CD8-positive, alpha-beta T cell (primary cell): ENCODE measurements at regions of chr1 and their contacts with region 1.

Region 1: DNA sequence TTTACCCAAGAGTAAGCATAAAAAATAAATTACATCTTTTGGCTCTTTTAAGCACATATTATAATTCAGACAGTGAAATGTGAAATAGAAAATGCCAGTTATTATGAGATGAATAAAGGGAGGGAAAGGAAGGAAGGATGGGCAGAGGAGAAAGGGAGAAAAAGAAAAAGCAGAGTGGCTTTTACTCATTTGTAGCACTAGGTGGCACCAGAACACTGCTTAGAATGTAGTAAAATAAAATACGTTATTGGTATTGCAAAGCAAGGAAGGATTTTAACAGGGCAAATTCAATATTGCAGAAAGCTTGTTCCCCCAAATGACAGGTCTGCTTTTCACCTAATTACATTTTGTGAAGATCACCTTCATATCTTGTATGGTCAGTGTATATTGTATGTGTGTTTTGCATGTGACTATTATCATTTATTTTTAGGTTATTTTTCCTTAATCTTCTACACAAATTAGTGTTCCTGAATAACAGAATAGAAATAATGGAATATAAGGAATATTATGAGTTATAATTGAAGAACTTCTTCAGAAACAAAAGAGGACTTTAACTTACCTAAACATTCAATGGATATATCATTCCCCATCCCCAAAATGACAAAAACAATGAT is 9.1 kb upstream of the PCNX2 start:
- DNase-seq: peak in 3 of 9 experiments; percentile 7 to 61 (median 53)
- ATAC-seq: peak; percentile 49
- H3K4me3 ChIP-seq: no peak overlapping the region
- H3K4me3 Mint-ChIP-seq: no peak overlapping the region
- H3K27ac ChIP-seq: no peak overlapping the region
- H3K27ac Mint-ChIP-seq: no peak overlapping the region
- H3K4me1 ChIP-seq: no peaks in the 10 kb centered on the region
- H3K4me1 Mint-ChIP-seq: no peaks in the 10 kb centered on the region
- H3K27me3 ChIP-seq: no peaks in the 10 kb centered on the region
- H3K27me3 Mint-ChIP-seq: peaks cover 11% of the 10 kb centered on the region
- CTCF ChIP-seq: peak; percentile 95

Region 2: DNA sequence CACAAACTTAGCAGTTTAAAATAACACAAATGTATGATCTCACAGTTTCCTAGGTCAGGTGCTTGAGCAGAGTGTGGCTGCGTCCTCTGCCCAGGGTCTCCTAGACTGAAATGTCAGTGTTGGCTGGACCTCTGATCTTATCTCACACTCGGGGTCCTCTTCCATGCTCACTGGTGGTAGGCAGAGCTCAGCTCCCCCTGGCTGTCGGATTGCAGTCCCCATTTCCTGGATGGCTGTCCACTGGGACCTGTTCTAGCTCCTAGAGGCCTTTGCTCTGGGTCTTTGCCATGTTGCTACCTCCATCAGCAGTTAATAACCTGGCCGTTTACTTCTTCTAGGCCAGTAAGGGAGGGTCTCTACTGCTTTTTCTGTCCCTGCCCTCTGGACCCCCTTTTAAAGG is 116.5 kb before region 1 on chr1:
- CTCF ChIA-PET with region 1: no interaction called
- POLR2A ChIA-PET with region 1: no interaction called
- intact Hi-C with region 1: no loop called
- DNase-seq: no peak
- ATAC-seq: no peak
- H3K4me3 ChIP-seq: no peak overlapping the region
- H3K4me3 Mint-ChIP-seq: no peak overlapping the region
- H3K27ac ChIP-seq: no peak overlapping the region
- H3K27ac Mint-ChIP-seq: no peak overlapping the region
- H3K4me1 ChIP-seq: no peaks in the 10 kb centered on the region
- H3K4me1 Mint-ChIP-seq: no peaks in the 10 kb centered on the region
- H3K27me3 ChIP-seq: no peaks in the 10 kb centered on the region
- H3K27me3 Mint-ChIP-seq: no peaks in the 10 kb centered on the region
- CTCF ChIP-seq: no peak

Region 3: GRCh38 chr1:233253832-233254331 is 50.7 kb before region 1 on chr1:
- CTCF ChIA-PET with region 1: no interaction called
- POLR2A ChIA-PET with region 1: no interaction called
- intact Hi-C with region 1: no loop called
- DNase-seq: no peak
- ATAC-seq: no peak
- H3K4me3 ChIP-seq: no peak overlapping the region
- H3K4me3 Mint-ChIP-seq: no peak overlapping the region
- H3K27ac ChIP-seq: no peak overlapping the region
- H3K27ac Mint-ChIP-seq: peak overlapping the region; percentile 11
- H3K4me1 ChIP-seq: no peaks in the 10 kb centered on the region
- H3K4me1 Mint-ChIP-seq: no peaks in the 10 kb centered on the region
- H3K27me3 ChIP-seq: no peaks in the 10 kb centered on the region
- H3K27me3 Mint-ChIP-seq: no peaks in the 10 kb centered on the region
- CTCF ChIP-seq: no peak

Region 4: DNA sequence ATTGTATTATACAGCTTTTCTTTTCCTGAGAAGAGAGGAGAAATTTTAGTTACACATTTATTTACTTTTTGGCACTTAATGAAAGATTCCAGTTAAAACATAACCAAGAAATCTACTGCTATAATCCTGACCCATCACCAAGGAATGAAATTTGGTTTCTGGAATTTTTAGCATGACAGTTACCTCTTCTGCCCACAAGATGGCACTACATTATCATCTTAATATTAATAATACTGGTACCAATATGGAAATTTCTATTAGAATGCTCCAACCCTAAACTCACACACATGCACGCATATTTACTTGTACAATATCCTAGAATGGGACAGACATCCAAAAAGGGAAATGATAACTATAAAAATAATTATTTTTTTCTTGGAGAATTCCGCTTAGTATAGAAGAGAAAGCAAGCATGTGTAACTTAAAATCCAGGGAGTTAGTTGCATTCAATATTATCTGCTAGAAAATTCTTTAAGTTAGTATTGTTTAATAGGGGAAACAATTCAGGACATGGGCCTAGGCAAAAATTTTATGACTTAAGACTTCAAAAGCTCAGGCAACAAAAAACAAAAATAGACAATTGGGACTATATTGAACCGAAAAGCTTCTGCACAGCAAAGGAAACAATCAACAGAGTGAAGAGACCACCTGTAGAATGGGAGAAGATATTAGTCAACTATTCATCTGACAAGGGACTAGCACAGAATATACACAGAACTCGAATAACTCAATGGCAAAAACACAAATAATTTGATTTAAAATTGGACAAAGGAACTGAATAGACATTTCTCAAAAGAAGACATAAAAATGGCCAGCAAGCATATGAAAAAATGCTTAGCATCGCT is 60.3 kb after region 1 on chr1:
- CTCF ChIA-PET with region 1: interaction called, 5 read pairs
- POLR2A ChIA-PET with region 1: no interaction called
- intact Hi-C with region 1: loop called (anchors 1 to 2 kb)
- DNase-seq: peak in 1 of 9 experiments; percentile 17
- ATAC-seq: no peak
- H3K4me3 ChIP-seq: no peak overlapping the region
- H3K4me3 Mint-ChIP-seq: no peak overlapping the region
- H3K27ac ChIP-seq: no peak overlapping the region
- H3K27ac Mint-ChIP-seq: no peak overlapping the region
- H3K4me1 ChIP-seq: no peaks in the 10 kb centered on the region
- H3K4me1 Mint-ChIP-seq: no peaks in the 10 kb centered on the region
- H3K27me3 ChIP-seq: no peaks in the 10 kb centered on the region
- H3K27me3 Mint-ChIP-seq: peaks cover 17% of the 10 kb centered on the region
- CTCF ChIP-seq: peak; percentile 57

Region 5: GRCh38 chr1:233394860-233395717 is 90.5 kb after region 1 on chr1:
- CTCF ChIA-PET with region 1: interaction called, 3 read pairs
- POLR2A ChIA-PET with region 1: no interaction called
- intact Hi-C with region 1: loop called in 1 of 2 experiments (anchors 10 kb)
- DNase-seq: peak in 2 of 9 experiments; percentile 29 to 47
- ATAC-seq: no peak
- H3K4me3 ChIP-seq: no peak overlapping the region
- H3K4me3 Mint-ChIP-seq: no peak overlapping the region
- H3K27ac ChIP-seq: no peak overlapping the region
- H3K27ac Mint-ChIP-seq: no peak overlapping the region
- H3K4me1 ChIP-seq: no peaks in the 10 kb centered on the region
- H3K4me1 Mint-ChIP-seq: no peaks in the 10 kb centered on the region
- H3K27me3 ChIP-seq: peaks cover 3 to 4% of the 10 kb centered on the region in 2 experiments
- H3K27me3 Mint-ChIP-seq: peaks cover 48% of the 10 kb centered on the region
- CTCF ChIP-seq: peak; percentile 56

Region 6: GRCh38 chr1:233790662-233791375 is 486.2 kb after region 1 on chr1:
- CTCF ChIA-PET with region 1: interaction called, 10 read pairs
- POLR2A ChIA-PET with region 1: no interaction called
- intact Hi-C with region 1: loop called in 1 of 2 experiments (anchors 1 kb)
- DNase-seq: peak in 7 of 9 experiments; percentile 0 to 65 (median 19)
- ATAC-seq: no peak
- H3K4me3 ChIP-seq: no peak overlapping the region
- H3K4me3 Mint-ChIP-seq: no peak overlapping the region
- H3K27ac ChIP-seq: no peak overlapping the region
- H3K27ac Mint-ChIP-seq: no peak overlapping the region
- H3K4me1 ChIP-seq: no peaks in the 10 kb centered on the region
- H3K4me1 Mint-ChIP-seq: no peaks in the 10 kb centered on the region
- H3K27me3 ChIP-seq: no peaks in the 10 kb centered on the region
- H3K27me3 Mint-ChIP-seq: peaks cover 11% of the 10 kb centered on the region
- CTCF ChIP-seq: peak; percentile 86

Region 7: GRCh38 chr1:234065794-234066447 is 761.3 kb after region 1 on chr1:
- CTCF ChIA-PET with region 1: interaction called, 19 read pairs
- POLR2A ChIA-PET with region 1: no interaction called
- intact Hi-C with region 1: loop called in 1 of 2 experiments (anchors 1 kb)
- DNase-seq: peak; percentile 21 to 73 (median 63)
- ATAC-seq: no peak
- H3K4me3 ChIP-seq: no peak overlapping the region
- H3K4me3 Mint-ChIP-seq: no peak overlapping the region
- H3K27ac ChIP-seq: no peak overlapping the region
- H3K27ac Mint-ChIP-seq: no peak overlapping the region
- H3K4me1 ChIP-seq: no peaks in the 10 kb centered on the region
- H3K4me1 Mint-ChIP-seq: peaks cover 2% of the 10 kb centered on the region
- H3K27me3 ChIP-seq: peaks cover 0 to 2% of the 10 kb centered on the region in 2 experiments
- H3K27me3 Mint-ChIP-seq: peaks cover 9% of the 10 kb centered on the region
- CTCF ChIP-seq: peak; percentile 69

Region 8: GRCh38 chr1:234309598-234310459 is 1005.2 kb after region 1 on chr1:
- CTCF ChIA-PET with region 1: interaction called, 5 read pairs
- POLR2A ChIA-PET with region 1: no interaction called
- intact Hi-C with region 1: loop called (anchors 1 to 2 kb)
- DNase-seq: peak; percentile 52 to 86 (median 66)
- ATAC-seq: peak; percentile 83
- H3K4me3 ChIP-seq: no peak overlapping the region
- H3K4me3 Mint-ChIP-seq: no peak overlapping the region
- H3K27ac ChIP-seq: no peak overlapping the region
- H3K27ac Mint-ChIP-seq: no peak overlapping the region
- H3K4me1 ChIP-seq: peaks cover 18% of the 10 kb centered on the region
- H3K4me1 Mint-ChIP-seq: peaks cover 3% of the 10 kb centered on the region
- H3K27me3 ChIP-seq: no peaks in the 10 kb centered on the region
- H3K27me3 Mint-ChIP-seq: peaks cover 15% of the 10 kb centered on the region
- CTCF ChIP-seq: peak; percentile 83